Pancreas (tissue), 10 donors: ENCODE measurements at regions of chr3 and their contacts with region 1.

Region 1: DNA sequence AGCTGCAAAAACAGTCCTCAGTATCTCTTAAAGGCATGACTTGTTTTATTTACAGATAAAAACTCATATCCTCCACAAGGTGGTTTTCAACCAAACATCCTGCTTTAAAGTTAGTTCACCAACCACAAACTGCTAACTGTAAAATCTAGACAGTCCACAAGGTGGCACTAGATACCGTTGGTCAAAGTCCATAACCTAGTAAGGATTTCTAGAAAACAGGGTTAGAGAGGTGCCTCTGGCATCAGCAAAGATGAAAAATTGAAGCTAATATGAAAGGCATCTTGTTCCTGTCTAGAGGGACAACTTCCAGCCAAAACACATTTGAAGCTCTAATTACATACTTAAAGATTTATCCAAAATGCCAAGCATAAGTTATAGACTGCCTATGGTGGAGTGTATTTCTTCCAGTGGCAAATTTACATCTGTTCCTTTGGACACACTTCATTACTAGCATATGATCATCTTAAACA is 56.0 kb downstream of the ZMAT3 start:
- DNase-seq: peak in 2 of 6 donors; percentile 20 to 50
- ATAC-seq: peak; percentile 72 to 97 (median 95)
- H3K4me3 ChIP-seq: no peak overlapping the region
- H3K27ac ChIP-seq: no peak overlapping the region
- H3K4me1 ChIP-seq: peaks cover 0 to 5% (median 5%) of the 10 kb centered on the region in 3 donors
- H3K27me3 ChIP-seq: no peaks in the 10 kb centered on the region
- CTCF ChIP-seq: peak; percentile 68 to 82 (median 74)

Region 2: GRCh38 chr3:179309225-179310078 is 293.9 kb after region 1 on chr3:
- intact Hi-C with region 1: loop called in 1 of 3 experiments (anchors 10 kb)
- DNase-seq: no peak
- ATAC-seq: no peak
- H3K4me3 ChIP-seq: no peak overlapping the region
- H3K27ac ChIP-seq: no peak overlapping the region
- H3K4me1 ChIP-seq: no peaks in the 10 kb centered on the region
- H3K27me3 ChIP-seq: peaks cover 0 to 3% (median 0%) of the 10 kb centered on the region in 4 donors
- CTCF ChIP-seq: no peak

Region 3: DNA sequence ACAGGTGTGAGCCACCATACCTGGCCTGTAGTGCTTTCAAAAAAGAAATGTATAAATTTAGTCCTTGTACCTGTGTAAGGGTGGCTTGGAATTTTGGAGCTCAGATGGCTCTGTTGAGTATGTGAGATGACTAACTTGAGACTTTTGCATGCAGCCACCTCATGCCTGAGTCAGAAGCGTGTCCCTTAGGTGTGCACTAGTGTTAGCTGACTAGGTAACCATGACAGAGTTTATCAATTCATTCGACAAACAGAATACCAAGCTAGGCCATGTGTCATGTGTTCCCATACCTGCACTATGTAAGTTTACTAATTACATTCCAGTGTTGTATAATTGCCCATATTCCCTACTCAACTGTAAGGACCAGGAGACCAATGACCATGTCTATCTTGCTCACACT is 303.3 kb after region 1 on chr3:
- intact Hi-C with region 1: loop called in 2 of 3 experiments (anchors 5 to 10 kb)
- DNase-seq: no peak
- ATAC-seq: no peak
- H3K4me3 ChIP-seq: no peak overlapping the region
- H3K27ac ChIP-seq: no peak overlapping the region
- H3K4me1 ChIP-seq: peaks cover 0 to 6% (median 0%) of the 10 kb centered on the region in 3 donors
- H3K27me3 ChIP-seq: no peaks in the 10 kb centered on the region
- CTCF ChIP-seq: no peak